ENCODE measurements at regions of chr16 and their contacts with region 1.

Region 1: DNA sequence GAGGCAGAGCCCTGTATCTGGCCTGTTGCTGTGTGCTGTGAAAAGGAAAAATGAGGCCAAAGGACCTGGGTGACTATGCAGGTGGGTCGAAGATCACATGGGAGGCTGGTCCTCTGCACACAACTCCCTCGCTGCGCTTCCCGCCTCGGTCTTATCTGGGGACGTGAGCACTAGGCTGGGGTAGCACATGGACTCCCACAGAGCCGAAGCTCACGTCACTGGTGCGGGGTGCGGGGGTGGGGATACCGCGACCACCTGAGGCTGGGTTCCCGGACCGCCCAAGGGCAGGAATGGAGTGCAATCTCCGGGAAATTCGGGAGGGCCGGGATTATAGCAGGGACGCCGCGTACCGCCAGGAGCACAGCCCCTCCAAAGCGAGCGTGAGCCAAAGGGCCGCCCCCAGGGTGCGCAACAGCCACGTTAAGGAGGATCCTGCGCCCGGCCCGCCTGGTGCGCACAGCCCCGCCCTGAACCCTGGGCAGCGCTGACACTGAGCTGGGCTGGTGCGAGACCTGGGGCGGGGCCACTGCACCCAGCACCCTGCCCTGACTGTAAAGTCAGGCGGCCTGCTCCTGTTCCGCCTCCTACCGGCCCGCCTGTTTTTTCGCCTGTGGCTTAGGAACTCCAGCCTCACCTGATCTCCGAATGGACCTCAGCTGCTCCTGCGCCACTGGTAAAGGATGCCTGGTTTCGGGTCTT is 4.8 kb downstream of the MT1A start:
- DNase-seq: peak; percentile 81
- H3K4me3 Mint-ChIP-seq: peak overlapping the region; percentile 63
- H3K27ac Mint-ChIP-seq: no peak overlapping the region
- H3K4me1 Mint-ChIP-seq: peaks cover 30% of the 10 kb centered on the region
- H3K27me3 Mint-ChIP-seq: peaks cover 66% of the 10 kb centered on the region

Region 2: GRCh38 chr16:56603589-56603988 is 39.6 kb before region 1 on chr16:
- CTCF ChIA-PET with region 1: interaction called, 12 read pairs
- POLR2A ChIA-PET with region 1: no interaction called
- DNase-seq: peak; percentile 38
- H3K4me3 Mint-ChIP-seq: no peak overlapping the region
- H3K27ac Mint-ChIP-seq: no peak overlapping the region
- H3K4me1 Mint-ChIP-seq: peaks cover 29% of the 10 kb centered on the region
- H3K27me3 Mint-ChIP-seq: peaks cover 14% of the 10 kb centered on the region

Region 3: GRCh38 chr16:56716761-56717160 is 73.5 kb after region 1 on chr16:
- CTCF ChIA-PET with region 1: no interaction called
- POLR2A ChIA-PET with region 1: no interaction called
- DNase-seq: no peak
- H3K4me3 Mint-ChIP-seq: no peak overlapping the region
- H3K27ac Mint-ChIP-seq: no peak overlapping the region
- H3K4me1 Mint-ChIP-seq: no peaks in the 10 kb centered on the region
- H3K27me3 Mint-ChIP-seq: peaks cover 6% of the 10 kb centered on the region